Heart left ventricle (tissue), 16 donors: ENCODE measurements at regions of chr20 and their contacts with region 1.

Region 1: DNA sequence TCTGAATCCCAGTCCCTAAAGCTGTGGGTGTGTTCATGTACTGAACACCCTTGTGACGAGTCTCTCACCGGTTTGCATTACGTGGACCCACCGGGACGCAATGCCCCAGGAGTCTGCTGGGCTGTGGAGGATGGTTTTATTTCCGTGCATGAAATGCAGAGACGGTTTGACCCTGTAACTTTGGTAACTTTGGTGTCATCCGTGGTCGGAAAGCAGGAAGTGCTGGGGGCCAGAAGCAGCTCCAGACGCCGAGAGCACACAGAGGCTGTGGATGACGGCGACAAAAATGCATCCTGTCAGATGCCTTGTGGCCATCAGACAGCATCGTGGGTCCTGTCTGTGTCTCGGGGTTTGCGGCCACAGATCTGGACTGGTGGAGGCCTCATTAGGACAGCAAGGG is 7.2 kb downstream of the BHLHE23 start:
- DNase-seq: no peak
- ATAC-seq: no peak
- H3K4me3 ChIP-seq: no peak overlapping the region
- H3K27ac ChIP-seq: no peak overlapping the region
- H3K4me1 ChIP-seq: peaks cover 0 to under 1% (median 0%) of the 10 kb centered on the region in 12 donors
- H3K27me3 ChIP-seq: peaks cover 14 to 93% (median 58%) of the 10 kb centered on the region in 9 donors
- CTCF ChIP-seq: no peak
- POLR2A ChIP-seq: no peak

Region 2: GRCh38 chr20:62668441-62669027 is 331.0 kb before region 1 on chr20:
- intact Hi-C with region 1: loop called in 3 of 10 experiments (anchors 10 kb)
- DNase-seq: peak in 4 of 5 donors; percentile 63 to 73 (median 66)
- ATAC-seq: peak in 3 of 4 donors; percentile 53 to 61 (median 56)
- H3K4me3 ChIP-seq: no peak overlapping the region
- H3K27ac ChIP-seq: no peak overlapping the region
- H3K4me1 ChIP-seq: peaks cover 0 to 27% (median 12%) of the 10 kb centered on the region in 12 donors
- H3K27me3 ChIP-seq: peaks cover 0 to 2% (median 0%) of the 10 kb centered on the region in 9 donors
- CTCF ChIP-seq: peak; percentile 75 to 87 (median 83)
- POLR2A ChIP-seq: no peak

Region 3: GRCh38 chr20:62818592-62819493 is 180.7 kb before region 1 on chr20:
- intact Hi-C with region 1: no loop called
- DNase-seq: peak; percentile 64 to 84 (median 72)
- ATAC-seq: peak; percentile 21 to 67 (median 51)
- H3K4me3 ChIP-seq: peak overlapping the region in 6 of 12 donors; percentile 4 to 26 (median 12)
- H3K27ac ChIP-seq: peak overlapping the region in 11 of 12 donors; percentile 6 to 64 (median 57)
- H3K4me1 ChIP-seq: peaks cover 0 to 57% (median 41%) of the 10 kb centered on the region in 12 donors
- H3K27me3 ChIP-seq: peaks cover 8 to 44% (median 31%) of the 10 kb centered on the region in 9 donors
- CTCF ChIP-seq: no peak
- POLR2A ChIP-seq: no peak

Region 4: GRCh38 chr20:62914970-62915457 is 84.6 kb before region 1 on chr20:
- intact Hi-C with region 1: no loop called
- DNase-seq: peak in 1 of 5 donors; percentile 39
- ATAC-seq: peak; percentile 70 to 84 (median 78)
- H3K4me3 ChIP-seq: peak overlapping the region in 7 of 12 donors; percentile 8 to 19 (median 15)
- H3K27ac ChIP-seq: no peak overlapping the region
- H3K4me1 ChIP-seq: peaks cover 7 to 83% (median 66%) of the 10 kb centered on the region in 12 donors
- H3K27me3 ChIP-seq: no peaks in the 10 kb centered on the region
- CTCF ChIP-seq: no peak
- POLR2A ChIP-seq: no peak